PC-3 (cell line): ENCODE measurements at regions of chr6 and their contacts with region 1.

Region 1: DNA sequence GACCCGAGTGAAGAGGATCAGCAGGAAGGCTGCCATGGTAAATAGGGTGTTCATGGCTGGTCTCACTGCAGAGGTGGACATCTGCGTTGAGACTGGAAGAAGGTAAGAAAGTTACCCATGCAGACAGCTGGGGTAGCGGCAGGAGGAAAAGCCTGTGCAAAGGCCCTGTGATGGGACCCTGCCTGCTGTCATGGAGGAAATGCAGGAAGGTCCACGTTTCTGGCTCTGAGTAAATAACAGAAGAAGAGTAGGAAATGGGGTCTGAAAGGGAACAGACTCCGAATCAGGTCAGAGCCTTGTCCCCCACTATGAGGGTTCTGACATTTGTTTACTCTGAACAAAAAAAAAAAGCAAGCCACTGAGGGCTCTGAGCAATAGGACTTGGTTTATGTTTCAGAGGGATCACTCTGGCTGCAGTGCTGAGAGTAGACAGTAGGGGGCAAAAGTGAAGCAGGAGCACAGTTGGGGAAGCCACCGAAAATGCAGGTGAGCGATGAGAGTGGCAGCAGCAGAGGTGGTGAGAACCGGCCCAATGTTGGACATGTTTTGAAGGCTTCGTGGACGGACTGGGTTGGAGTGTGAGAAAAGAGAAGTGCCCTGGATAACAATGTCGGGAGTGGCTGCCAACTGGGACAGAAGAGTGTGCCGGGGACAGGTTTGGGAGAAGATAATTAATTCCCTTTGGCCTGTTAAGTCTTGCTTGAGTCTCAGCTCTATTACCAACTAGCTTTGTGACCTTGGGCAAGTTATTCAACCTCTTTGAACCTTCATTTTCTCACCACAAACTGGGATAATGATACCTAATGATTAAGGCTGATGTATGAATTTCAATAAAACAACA is 57.9 kb upstream of the MAP7 start:
- DNase-seq: peak; percentile 76
- ATAC-seq: no peak
- H3K4me3 ChIP-seq: no peak overlapping the region
- H3K27ac ChIP-seq: peak overlapping the region; percentile 97
- H3K4me1 ChIP-seq: peaks cover 43% of the 10 kb centered on the region
- H3K27me3 ChIP-seq: no peaks in the 10 kb centered on the region
- CTCF ChIP-seq: peak; percentile 73

Region 2: DNA sequence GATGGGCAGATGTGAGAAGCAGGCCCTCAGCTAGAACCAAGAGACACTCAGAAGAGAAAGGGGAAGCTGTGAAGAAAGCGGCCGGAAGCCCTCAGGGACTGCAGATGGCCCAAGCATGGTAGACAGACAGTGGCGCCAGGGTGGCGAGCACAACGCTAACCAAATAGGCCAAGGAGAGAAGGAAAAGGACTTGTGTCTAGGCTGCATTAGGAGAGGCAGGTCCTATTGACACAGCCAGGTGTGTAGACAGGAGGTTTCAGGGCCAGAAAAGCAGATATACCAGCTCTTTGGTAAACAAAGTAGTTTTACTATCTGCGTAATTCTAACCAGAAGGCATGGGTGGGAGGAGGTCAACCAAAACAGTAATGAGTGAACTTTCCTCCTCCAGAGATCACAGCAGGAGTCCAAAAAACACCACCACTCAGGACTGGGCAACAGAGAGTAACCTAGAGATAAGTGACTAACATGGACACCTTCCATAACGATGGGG is 42.1 kb before region 1 on chr6:
- CTCF ChIA-PET with region 1: no interaction called
- POLR2A ChIA-PET with region 1: no interaction called
- intact Hi-C with region 1: loop called (anchors 5 kb)
- DNase-seq: peak; percentile 75
- ATAC-seq: peak; percentile 65
- H3K4me3 ChIP-seq: peak overlapping the region; percentile 42; the same call in 1 of the 2 replicates
- H3K27ac ChIP-seq: peak overlapping the region; percentile 97
- H3K4me1 ChIP-seq: peaks cover 38% of the 10 kb centered on the region
- H3K27me3 ChIP-seq: no peaks in the 10 kb centered on the region
- CTCF ChIP-seq: no peak

Region 3: GRCh38 chr6:136643850-136644596 is 35.9 kb after region 1 on chr6:
- CTCF ChIA-PET with region 1: interaction called, 4 read pairs
- POLR2A ChIA-PET with region 1: no interaction called
- intact Hi-C with region 1: loop called (anchors 1 kb)
- DNase-seq: peak; percentile 88
- ATAC-seq: peak; percentile 99
- H3K4me3 ChIP-seq: no peak overlapping the region
- H3K27ac ChIP-seq: peak overlapping the region; percentile 48
- H3K4me1 ChIP-seq: peaks cover 12% of the 10 kb centered on the region; the same call in 1 of the 2 replicates
- H3K27me3 ChIP-seq: no peaks in the 10 kb centered on the region
- CTCF ChIP-seq: peak; percentile 89

Region 4: DNA sequence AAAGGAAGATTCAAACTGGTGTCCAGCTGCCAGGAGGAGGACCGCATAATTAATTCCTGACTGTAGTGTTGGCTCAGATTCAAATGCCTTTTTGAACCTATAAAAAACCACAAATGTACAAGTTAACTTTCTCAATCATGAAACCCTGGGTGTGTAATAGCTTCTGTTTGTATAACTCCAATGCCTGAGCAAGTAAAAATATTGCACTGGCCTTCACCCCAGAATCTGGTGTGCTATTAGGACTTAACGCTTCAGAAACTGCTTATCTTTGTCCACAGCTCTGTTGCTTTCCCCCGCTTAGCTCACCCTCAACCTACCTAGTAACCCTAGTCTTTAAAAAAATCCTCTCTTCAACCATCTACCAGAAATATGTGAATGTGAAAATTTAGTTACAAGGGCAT is 61.1 kb after region 1 on chr6:
- CTCF ChIA-PET with region 1: no interaction called
- POLR2A ChIA-PET with region 1: no interaction called
- intact Hi-C with region 1: no loop called
- DNase-seq: peak; percentile 85
- ATAC-seq: peak; percentile 88
- H3K4me3 ChIP-seq: peak overlapping the region; percentile 32; the same call in 1 of the 2 replicates
- H3K27ac ChIP-seq: peak overlapping the region; percentile 59
- H3K4me1 ChIP-seq: peaks cover 30% of the 10 kb centered on the region
- H3K27me3 ChIP-seq: no peaks in the 10 kb centered on the region
- CTCF ChIP-seq: no peak